Activated B cell treated with CpG ODN at 0.5 μM for 24 hours (primary cell): ENCODE measurements at regions of chr3 and their contacts with region 1.

Region 1: DNA sequence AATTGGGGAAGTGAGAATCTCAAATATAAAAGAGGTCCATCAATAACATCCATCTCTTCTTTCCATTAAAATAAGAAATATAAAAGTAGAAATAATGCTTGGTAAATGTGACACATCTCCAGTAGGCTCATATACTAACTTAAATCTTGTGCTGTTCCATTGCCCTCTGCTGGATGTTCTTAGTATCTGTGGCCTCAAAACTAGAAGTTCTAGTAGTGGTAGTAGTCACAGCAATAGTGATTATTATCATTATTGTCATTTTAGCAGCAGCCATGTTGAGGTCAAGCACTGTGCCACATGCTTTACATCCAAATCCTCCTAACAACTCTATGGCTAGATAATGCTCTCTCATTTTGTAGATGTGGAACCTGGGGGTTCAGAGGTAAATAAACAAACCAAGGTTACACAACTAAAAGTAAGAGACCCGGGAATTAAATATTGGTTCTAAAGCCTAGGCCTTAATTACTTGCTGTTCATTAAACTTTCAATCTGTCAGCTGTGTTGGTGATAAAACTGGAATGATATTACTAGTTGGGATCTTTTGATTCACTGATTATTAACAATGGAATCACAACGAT is 20.2 kb upstream of the BTLA start:
- DNase-seq: no peak
- ATAC-seq: peak; percentile 75
- H3K4me3 Mint-ChIP-seq: peak overlapping the region; percentile 58
- H3K27ac Mint-ChIP-seq: peak overlapping the region; percentile 89
- H3K4me1 Mint-ChIP-seq: peaks cover 41% of the 10 kb centered on the region
- H3K27me3 Mint-ChIP-seq: no peaks in the 10 kb centered on the region
- CTCF ChIP-seq: no peak

Region 2: GRCh38 chr3:112327371-112327951 is 192.1 kb before region 1 on chr3:
- CTCF ChIA-PET with region 1: interaction called, 9 read pairs
- POLR2A ChIA-PET with region 1: interaction called, 4 read pairs
- intact Hi-C with region 1: loop called (anchors 1 kb)
- DNase-seq: no peak
- ATAC-seq: peak; percentile 100
- H3K4me3 Mint-ChIP-seq: no peak overlapping the region
- H3K27ac Mint-ChIP-seq: no peak overlapping the region
- H3K4me1 Mint-ChIP-seq: peaks cover 17% of the 10 kb centered on the region
- H3K27me3 Mint-ChIP-seq: no peaks in the 10 kb centered on the region
- CTCF ChIP-seq: no peak

Region 3: DNA sequence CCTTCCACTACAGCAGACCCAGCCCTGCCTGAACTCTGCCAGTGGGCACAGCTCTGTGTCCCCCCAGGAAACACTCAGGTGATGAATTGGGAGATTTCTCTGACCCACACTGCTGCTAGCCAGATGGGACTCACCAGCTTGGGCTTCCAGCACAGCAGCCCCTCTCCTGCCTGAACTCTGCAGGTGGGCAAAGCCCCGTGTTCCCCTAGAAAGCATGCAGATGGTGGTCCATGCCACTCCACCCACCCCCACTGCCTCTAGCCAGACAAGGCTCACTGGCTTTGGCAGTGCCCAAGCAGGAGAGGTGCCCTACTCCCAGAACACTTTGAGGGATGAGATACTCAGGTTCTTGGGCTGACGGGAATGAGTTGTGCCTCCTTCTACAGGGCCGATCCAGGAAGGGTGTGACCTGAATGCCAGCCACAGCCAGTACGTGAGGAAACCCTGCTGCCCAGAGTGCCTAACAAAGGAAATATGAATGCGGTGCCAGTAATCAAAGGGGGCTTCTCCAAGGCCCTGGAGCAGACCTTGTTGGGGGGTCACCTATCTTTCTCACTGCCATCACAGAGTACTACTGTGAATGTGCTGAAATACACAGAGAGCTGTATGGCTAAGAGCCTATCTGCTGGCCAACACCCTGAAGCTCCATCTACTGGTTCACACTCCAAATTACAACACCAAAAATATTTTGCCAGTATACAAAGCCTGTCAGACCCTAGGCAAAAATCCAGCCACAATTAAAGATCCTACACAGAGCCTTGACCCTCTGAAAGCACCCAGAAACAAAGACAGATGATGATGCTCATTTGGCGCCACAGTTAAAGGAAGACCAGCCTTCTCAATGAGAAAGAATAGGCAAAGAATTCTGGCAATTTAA is 82.1 kb before region 1 on chr3:
- CTCF ChIA-PET with region 1: interaction called, 3 read pairs
- POLR2A ChIA-PET with region 1: no interaction called
- intact Hi-C with region 1: loop called (anchors 1 kb)
- DNase-seq: no peak
- ATAC-seq: peak; percentile 84
- H3K4me3 Mint-ChIP-seq: no peak overlapping the region
- H3K27ac Mint-ChIP-seq: no peak overlapping the region
- H3K4me1 Mint-ChIP-seq: peaks cover 58% of the 10 kb centered on the region
- H3K27me3 Mint-ChIP-seq: no peaks in the 10 kb centered on the region
- CTCF ChIP-seq: no peak

Region 4: DNA sequence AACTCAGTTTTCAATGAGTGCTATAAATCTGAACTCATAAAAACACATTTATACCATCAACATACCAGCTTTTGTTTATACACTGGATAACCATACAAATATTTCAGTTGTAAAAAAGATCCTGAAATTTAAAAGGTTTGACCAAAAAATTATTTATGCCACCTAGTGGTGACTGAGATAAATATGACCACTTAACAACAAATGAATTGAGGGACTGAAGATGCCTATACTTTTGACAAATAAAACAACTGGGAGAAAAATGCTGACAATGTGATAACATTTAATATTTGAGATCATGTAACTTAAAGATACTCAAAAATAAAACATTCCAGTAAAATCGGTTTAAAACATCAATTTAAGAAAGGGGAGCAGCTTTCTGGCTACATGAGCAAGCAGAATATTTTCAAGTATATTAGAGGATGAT is 11.9 kb after region 1 on chr3:
- CTCF ChIA-PET with region 1: interaction called, 8 read pairs
- POLR2A ChIA-PET with region 1: no interaction called
- intact Hi-C with region 1: loop called (anchors 1 kb)
- DNase-seq: no peak
- ATAC-seq: no peak
- H3K4me3 Mint-ChIP-seq: no peak overlapping the region
- H3K27ac Mint-ChIP-seq: peak overlapping the region; percentile 27
- H3K4me1 Mint-ChIP-seq: peaks cover 3% of the 10 kb centered on the region
- H3K27me3 Mint-ChIP-seq: no peaks in the 10 kb centered on the region
- CTCF ChIP-seq: peak; percentile 9